Left ventricle myocardium inferior (tissue), 1 donor: ENCODE measurements at regions of chr3 and their contacts with region 1.

Region 1: DNA sequence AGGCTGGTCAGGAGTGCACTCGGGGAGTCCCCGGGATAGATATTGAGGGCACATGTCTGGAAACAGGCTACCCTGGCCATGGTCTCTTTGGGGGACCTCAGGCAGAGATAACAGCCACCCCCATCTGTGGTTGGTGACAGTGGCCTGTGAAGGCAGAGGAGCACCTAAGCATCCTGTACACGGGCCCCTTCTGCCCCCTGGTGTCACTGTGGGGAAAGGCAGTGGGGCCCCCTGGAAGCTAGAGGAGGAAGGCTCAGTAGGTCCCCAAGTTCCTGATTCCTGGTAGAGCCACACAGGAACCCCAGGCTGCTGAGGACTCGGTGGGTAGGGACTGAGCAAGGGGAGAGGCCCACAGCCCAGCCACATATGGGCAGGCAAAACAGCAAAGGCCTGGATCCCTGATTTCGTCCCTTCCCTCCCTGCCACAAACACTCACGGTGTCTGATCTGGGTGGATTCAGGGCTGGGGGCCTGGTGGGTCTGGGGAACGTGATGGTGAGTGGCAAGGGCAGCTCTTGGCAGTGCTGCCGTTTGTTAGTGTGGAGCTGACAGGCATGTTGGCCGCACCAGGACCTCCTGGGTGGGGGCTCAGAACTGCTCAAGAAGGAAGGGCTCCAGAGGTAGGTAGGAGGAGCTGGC is 14.1 kb upstream of the CXCR6 start:
- DNase-seq: no peak
- H3K4me3 ChIP-seq: no peak overlapping the region
- H3K27ac ChIP-seq: no peak overlapping the region
- H3K4me1 ChIP-seq: peaks cover 24% of the 10 kb centered on the region
- H3K27me3 ChIP-seq: no peaks in the 10 kb centered on the region
- CTCF ChIP-seq: peak; percentile 65

Region 2: GRCh38 chr3:45841757-45842491 is 87.2 kb before region 1 on chr3 and contains the start of gene LZTFL1:
- intact Hi-C with region 1: loop called (anchors 5 kb)
- DNase-seq: peak; percentile 89
- H3K4me3 ChIP-seq: peak within 1 kb of the TSS; percentile 91
- H3K27ac ChIP-seq: peak within 1 kb of the TSS; percentile 54
- H3K4me1 ChIP-seq: peaks cover 20% of the 10 kb centered on the region
- H3K27me3 ChIP-seq: no peaks in the 10 kb centered on the region
- CTCF ChIP-seq: no peak
- total RNA-seq, gene LZTFL1: 7.4 TPM